ENCODE measurements at regions of chr4 and their contacts with region 1.

Region 1: GRCh38 chr4:125314676-125315575 is at the start of gene FAT4:
- DNase-seq: peak; percentile 98
- H3K4me3 ChIP-seq: peak within 1 kb of the TSS; percentile 68 to 88 (median 86)
- H3K27ac ChIP-seq: peak within 1 kb of the TSS; percentile 91 to 97 (median 91)
- H3K4me1 ChIP-seq: peaks cover 9 to 23% of the 10 kb centered on the region in 2 donors
- H3K27me3 ChIP-seq: no peaks in the 10 kb centered on the region
- CTCF ChIP-seq: peak in 3 of 6 experiments; percentile 22 to 28 (median 25)
- POLR2A ChIP-seq: peak; percentile 41 to 94
- total RNA-seq, gene FAT4: 29.3 to 49.8 (median 40.2) TPM

Region 2: GRCh38 chr4:125389713-125390112 is 74.8 kb after region 1 on chr4:
- intact Hi-C with region 1: no loop called
- DNase-seq: no peak
- H3K4me3 ChIP-seq: no peak overlapping the region
- H3K27ac ChIP-seq: peak overlapping the region in 2 of 3 donors; percentile 30 to 52
- H3K4me1 ChIP-seq: peaks cover 4 to 36% of the 10 kb centered on the region in 2 donors
- H3K27me3 ChIP-seq: no peaks in the 10 kb centered on the region
- CTCF ChIP-seq: no peak
- POLR2A ChIP-seq: peak in 1 of 2 donors; percentile 3

Region 3: DNA sequence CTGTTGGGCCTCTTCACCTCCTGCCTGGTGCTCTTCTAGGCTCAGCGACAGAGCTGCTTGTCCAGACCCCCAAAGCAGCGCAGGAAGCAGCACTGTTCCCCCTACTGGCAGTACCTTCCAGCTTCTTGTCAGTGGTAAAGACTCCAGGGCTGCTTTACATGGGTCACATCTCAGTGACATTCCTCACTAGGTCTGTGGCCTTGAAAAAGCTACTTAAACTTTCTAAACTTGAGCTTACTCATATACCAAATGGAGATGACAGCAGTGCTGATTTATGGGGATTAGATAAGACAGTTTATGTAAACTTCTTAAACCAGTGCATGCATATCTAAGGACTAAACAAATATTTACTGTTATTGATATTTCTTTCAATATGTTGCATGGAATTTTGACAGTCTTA is 117.2 kb after region 1 on chr4:
- intact Hi-C with region 1: loop called (anchors 10 kb)
- DNase-seq: no peak
- H3K4me3 ChIP-seq: no peak overlapping the region
- H3K27ac ChIP-seq: no peak overlapping the region
- H3K4me1 ChIP-seq: no peaks in the 10 kb centered on the region
- H3K27me3 ChIP-seq: no peaks in the 10 kb centered on the region
- CTCF ChIP-seq: peak in 1 of 6 experiments; percentile 10
- POLR2A ChIP-seq: no peak

Region 4: DNA sequence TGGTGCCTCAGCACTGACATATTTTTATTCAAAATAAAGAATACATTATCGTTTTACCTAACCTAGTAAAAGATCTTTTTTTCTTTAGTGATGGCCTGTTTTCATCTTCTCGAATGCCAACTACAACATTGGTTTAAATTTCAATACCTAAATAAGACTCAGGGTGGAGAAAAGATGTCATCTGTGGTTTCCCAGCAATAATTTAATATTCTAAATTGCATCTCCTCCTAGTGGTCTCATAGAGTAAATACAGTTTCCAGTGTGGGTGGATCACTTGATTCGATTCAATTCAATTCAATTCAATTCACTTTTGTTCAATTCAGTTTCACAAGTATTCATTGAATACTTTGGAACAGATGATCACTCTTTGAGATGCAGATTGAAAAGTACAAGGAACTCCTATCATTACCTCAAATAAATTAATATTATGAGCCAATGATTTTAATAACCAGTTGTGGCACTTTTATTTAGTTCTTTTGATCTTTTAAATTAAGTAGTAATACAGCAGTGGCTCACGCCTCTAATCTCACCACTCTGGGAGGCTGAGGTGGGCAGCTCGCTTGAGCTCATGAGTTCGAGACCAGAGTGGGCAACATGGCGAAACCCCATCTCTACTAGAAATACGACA is 427.0 kb after region 1 on chr4:
- intact Hi-C with region 1: loop called (anchors 2 kb)
- DNase-seq: no peak
- H3K4me3 ChIP-seq: no peak overlapping the region
- H3K27ac ChIP-seq: no peak overlapping the region
- H3K4me1 ChIP-seq: no peaks in the 10 kb centered on the region
- H3K27me3 ChIP-seq: no peaks in the 10 kb centered on the region
- CTCF ChIP-seq: peak in 5 of 6 experiments; percentile 39 to 95 (median 77)
- POLR2A ChIP-seq: no peak

Measured in thyroid gland (tissue), 4 donors.